Activated naive CD4-positive, alpha-beta T cell treated with anti-CD3 and anti-CD28 coated beads for 36 hours (primary cell): ENCODE measurements at regions of chr17 and their contacts with region 1.

Region 1: GRCh38 chr17:67376737-67377487 is at the start of gene PITPNC1:
- DNase-seq: peak; percentile 90
- H3K4me3 Mint-ChIP-seq: peak within 1 kb of the TSS; percentile 88
- H3K27ac Mint-ChIP-seq: peak within 1 kb of the TSS; percentile 82
- H3K4me1 Mint-ChIP-seq: peaks cover 38% of the 10 kb centered on the region
- H3K27me3 Mint-ChIP-seq: no peaks in the 10 kb centered on the region
- total RNA-seq, gene PITPNC1: 58.7 to 60.0 TPM

Region 2: GRCh38 chr17:67366193-67367157 is 10.4 kb before region 1 on chr17 and contains the start of gene PSMD12:
- CTCF ChIA-PET with region 1: interaction called, 52 read pairs
- intact Hi-C with region 1: loop called (anchors 1 kb)
- DNase-seq: peak; percentile 95
- H3K4me3 Mint-ChIP-seq: peak within 1 kb of the TSS; percentile 90
- H3K27ac Mint-ChIP-seq: peak within 1 kb of the TSS; percentile 93
- H3K4me1 Mint-ChIP-seq: peaks cover 42% of the 10 kb centered on the region
- H3K27me3 Mint-ChIP-seq: no peaks in the 10 kb centered on the region
- total RNA-seq, gene PSMD12: 67.8 to 70.7 TPM

Region 3: GRCh38 chr17:67441052-67441927 is 64.4 kb after region 1 on chr17:
- CTCF ChIA-PET with region 1: interaction called, 24 read pairs
- intact Hi-C with region 1: no loop called
- DNase-seq: peak; percentile 90
- H3K4me3 Mint-ChIP-seq: peak overlapping the region; percentile 75
- H3K27ac Mint-ChIP-seq: peak overlapping the region; percentile 96
- H3K4me1 Mint-ChIP-seq: peaks cover 76% of the 10 kb centered on the region
- H3K27me3 Mint-ChIP-seq: no peaks in the 10 kb centered on the region

Region 4: DNA sequence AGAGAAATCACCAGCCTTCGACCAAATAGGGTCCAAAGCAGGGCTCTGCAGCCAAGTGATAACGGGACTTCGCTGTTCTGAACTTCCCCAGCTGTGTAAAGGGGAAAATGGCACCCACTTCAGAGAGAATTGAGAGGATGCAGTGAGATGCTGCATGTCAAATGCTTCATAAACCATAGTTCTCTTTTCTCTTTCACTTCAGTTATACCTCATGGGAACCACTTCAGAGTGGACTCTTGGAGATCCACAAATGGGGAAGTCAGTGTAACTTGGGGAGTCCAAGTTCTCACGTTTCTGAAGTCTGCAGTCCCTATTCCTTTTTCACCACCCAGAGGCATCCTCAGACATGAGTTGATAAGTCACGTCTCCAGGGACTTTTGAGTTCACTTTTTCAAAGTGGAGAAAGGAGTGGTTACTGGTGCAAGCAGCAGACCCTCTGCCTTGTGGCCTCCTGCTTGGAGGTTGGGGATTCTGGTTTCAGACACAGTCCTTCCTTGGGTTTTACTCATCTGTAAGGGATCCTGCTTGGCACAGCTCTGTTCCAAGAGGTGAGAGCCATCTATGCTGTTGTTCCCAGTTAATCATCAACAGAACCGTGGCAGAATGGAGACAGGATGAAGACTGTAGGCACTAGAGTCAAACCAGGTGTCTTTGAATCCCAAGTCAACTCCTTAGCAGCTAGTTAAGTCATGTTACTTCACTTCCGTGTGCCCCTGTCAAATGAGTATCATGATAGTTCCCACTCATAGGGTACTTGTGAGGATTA is 217.4 kb after region 1 on chr17:
- CTCF ChIA-PET with region 1: interaction called, 10 read pairs
- intact Hi-C with region 1: no loop called
- DNase-seq: no peak
- H3K4me3 Mint-ChIP-seq: no peak overlapping the region
- H3K27ac Mint-ChIP-seq: no peak overlapping the region
- H3K4me1 Mint-ChIP-seq: no peaks in the 10 kb centered on the region
- H3K27me3 Mint-ChIP-seq: no peaks in the 10 kb centered on the region

Region 5: DNA sequence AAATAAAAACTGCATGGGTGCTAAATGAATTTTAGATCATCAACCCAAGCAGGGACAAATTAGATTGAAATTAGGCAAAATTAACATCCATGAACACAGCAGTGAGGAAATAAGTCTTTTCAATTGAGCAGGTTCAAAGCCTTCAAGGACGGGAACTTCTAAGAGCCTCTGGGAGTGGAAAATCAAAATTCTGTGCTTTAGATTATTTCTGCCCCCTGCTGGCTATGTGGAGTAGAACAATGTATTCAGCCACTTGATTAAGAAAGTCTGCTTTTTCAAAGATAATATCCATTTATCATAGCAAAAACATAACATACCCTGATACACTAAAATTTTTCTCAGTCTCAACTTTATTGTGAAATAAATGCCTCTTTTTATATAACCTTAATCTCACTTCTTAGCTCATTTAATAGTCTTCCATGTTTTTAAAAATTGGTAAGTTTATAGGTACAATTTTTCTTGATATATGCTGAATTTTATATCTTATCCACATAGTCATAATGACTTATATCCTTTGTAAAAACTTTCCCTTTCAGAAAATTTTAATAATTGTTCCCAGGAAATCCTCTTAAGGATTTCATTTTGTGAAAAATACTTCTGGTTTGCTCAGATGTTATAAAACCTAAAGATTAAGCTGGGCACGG is 312.7 kb after region 1 on chr17:
- CTCF ChIA-PET with region 1: interaction called, 87 read pairs
- intact Hi-C with region 1: loop called (anchors 1 kb)
- DNase-seq: peak; percentile 71
- H3K4me3 Mint-ChIP-seq: no peak overlapping the region
- H3K27ac Mint-ChIP-seq: no peak overlapping the region
- H3K4me1 Mint-ChIP-seq: peaks cover 4% of the 10 kb centered on the region
- H3K27me3 Mint-ChIP-seq: no peaks in the 10 kb centered on the region

Region 6: GRCh38 chr17:67993596-67994361 is 616.9 kb after region 1 on chr17:
- CTCF ChIA-PET with region 1: no interaction called
- intact Hi-C with region 1: loop called (anchors 10 kb)
- DNase-seq: peak; percentile 67
- H3K4me3 Mint-ChIP-seq: peak overlapping the region; percentile 78
- H3K27ac Mint-ChIP-seq: peak overlapping the region; percentile 78
- H3K4me1 Mint-ChIP-seq: peaks cover 30% of the 10 kb centered on the region
- H3K27me3 Mint-ChIP-seq: peaks cover 17% of the 10 kb centered on the region